Activated T-helper 2 cell treated with anti-CD3 and anti-CD28 coated beads, Interferon-gamma antibody, Interleukin-2, Interleukin-4, amounts not matched to agents 10 μg/mL and 5 μg/mL and 100 μg/mL, durations not matched to agents 14 hours and 24 hours and 36 hours (primary cell): ENCODE measurements at regions of chr15 and their contacts with region 1.

Region 1: DNA sequence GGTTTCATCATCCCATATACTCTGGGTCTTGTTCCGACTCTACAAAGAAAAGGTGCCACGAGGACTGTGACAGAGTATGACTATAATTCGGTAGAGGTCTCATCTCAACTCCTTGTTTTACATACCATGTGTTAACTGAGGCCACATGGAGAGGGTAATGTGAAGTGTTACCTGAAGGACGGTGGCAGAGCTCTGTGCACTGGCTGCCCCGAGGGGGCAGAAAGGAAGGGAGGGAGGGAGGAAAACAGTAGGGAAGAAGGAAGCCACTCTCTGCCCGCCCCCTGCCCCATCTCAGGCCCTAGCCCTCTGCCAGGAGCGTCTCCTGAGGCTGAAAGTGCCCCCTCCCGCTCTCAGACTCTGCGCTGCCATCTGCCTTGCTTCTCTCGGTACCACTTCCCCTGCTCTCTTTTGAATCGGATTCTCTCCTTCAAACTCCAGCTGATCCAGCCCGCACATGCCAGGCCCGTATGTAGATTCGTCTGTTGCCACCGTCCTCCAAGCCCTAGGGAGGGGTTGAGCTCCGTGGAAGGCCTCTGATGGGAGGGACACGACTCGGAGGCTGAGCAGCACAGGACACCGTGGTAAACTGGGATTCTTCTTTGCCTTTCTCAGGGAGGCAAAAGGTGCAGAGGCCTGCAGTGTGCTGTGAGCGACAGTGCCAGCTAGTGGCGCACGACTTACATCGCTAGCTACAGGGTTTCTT is 70.5 kb upstream of the ATP10A start:
- DNase-seq: peak; percentile 61
- H3K4me3 Mint-ChIP-seq: peak overlapping the region; percentile 81
- H3K27ac Mint-ChIP-seq: peak overlapping the region; percentile 51
- H3K4me1 Mint-ChIP-seq: peaks cover 7% of the 10 kb centered on the region
- H3K27me3 Mint-ChIP-seq: peaks cover 12% of the 10 kb centered on the region

Region 2: GRCh38 chr15:25508369-25509002 is 425.1 kb before region 1 on chr15:
- intact Hi-C with region 1: loop called (anchors 10 kb)
- DNase-seq: no peak
- H3K4me3 Mint-ChIP-seq: no peak overlapping the region
- H3K27ac Mint-ChIP-seq: no peak overlapping the region
- H3K4me1 Mint-ChIP-seq: no peaks in the 10 kb centered on the region
- H3K27me3 Mint-ChIP-seq: no peaks in the 10 kb centered on the region

Region 3: GRCh38 chr15:25596644-25597562 is 336.7 kb before region 1 on chr15:
- intact Hi-C with region 1: no loop called
- DNase-seq: no peak
- H3K4me3 Mint-ChIP-seq: no peak overlapping the region
- H3K27ac Mint-ChIP-seq: no peak overlapping the region
- H3K4me1 Mint-ChIP-seq: no peaks in the 10 kb centered on the region
- H3K27me3 Mint-ChIP-seq: no peaks in the 10 kb centered on the region

Region 4: DNA sequence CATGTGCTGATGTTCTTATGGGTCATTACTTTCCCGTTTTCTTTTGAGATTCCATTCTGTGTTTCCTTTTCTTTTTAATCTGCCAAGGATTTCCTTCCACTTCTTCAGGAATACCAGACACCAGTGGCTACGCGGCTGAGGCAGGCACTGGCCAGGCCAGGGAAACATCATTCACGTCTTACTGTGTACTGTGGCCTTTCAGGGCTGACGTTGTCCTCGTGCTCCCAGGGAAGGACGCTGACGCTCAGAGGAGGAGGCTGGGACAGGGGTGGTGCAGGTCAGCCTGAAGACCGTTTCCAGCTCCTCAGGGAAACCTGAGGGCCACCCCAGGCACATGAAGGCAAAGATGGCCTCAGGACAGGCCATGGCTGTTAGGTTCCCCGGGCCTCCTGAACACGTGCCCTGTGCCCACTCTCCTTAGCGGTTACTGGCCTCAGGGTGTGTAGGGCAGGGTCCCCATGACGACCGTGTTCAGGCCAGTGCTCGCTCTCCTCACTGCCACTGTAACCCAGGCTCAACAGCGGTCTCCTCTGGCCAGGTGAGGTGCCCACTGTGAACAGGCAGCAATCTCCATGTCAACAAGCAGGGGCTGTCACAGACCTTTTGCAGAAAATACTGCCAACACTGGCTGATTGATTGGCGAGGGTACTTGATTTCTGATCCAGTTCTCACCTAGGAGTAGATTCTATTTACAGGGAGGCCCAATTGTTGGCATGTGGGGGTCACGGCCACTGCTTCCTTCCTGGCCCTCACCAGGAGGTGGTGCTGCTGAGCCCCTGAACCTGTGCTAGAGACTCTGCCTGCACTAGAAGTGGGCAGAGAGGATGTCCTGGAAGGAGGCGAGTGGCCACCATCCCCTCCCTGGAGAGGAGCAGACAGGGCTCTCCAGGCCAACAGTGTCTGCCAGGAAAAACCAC is 240.0 kb before region 1 on chr15:
- intact Hi-C with region 1: loop called (anchors 1 kb)
- DNase-seq: no peak
- H3K4me3 Mint-ChIP-seq: no peak overlapping the region
- H3K27ac Mint-ChIP-seq: no peak overlapping the region
- H3K4me1 Mint-ChIP-seq: no peaks in the 10 kb centered on the region
- H3K27me3 Mint-ChIP-seq: no peaks in the 10 kb centered on the region

Region 5: DNA sequence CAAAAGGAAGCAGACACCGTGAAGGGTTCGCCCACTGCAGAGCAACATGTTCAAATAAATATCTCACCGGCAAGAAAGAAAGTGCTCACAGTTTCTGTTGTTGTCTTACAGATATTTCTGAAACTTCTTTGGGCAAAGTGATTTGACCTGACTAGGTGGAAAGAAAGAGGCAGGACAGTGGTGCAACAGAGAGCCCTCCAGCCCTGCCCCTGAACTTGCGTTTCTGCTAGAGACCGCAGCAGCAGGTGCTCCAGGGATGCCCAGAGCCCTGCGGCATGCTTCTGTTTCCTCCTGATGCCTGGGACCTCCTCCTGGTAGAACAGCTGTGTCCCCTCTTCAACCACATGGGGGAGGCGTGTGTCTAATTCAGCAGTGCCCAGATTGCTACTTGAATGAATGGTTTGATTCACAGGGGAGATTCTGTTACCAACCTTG is 193.9 kb before region 1 on chr15:
- intact Hi-C with region 1: loop called (anchors 2 kb)
- DNase-seq: no peak
- H3K4me3 Mint-ChIP-seq: no peak overlapping the region
- H3K27ac Mint-ChIP-seq: peak overlapping the region; percentile 47
- H3K4me1 Mint-ChIP-seq: peaks cover 16% of the 10 kb centered on the region
- H3K27me3 Mint-ChIP-seq: no peaks in the 10 kb centered on the region

Region 6: GRCh38 chr15:25783607-25784540 is 149.7 kb before region 1 on chr15:
- intact Hi-C with region 1: loop called (anchors 1 kb)
- DNase-seq: no peak
- H3K4me3 Mint-ChIP-seq: peak overlapping the region; percentile 37
- H3K27ac Mint-ChIP-seq: peak overlapping the region; percentile 85
- H3K4me1 Mint-ChIP-seq: peaks cover 36% of the 10 kb centered on the region
- H3K27me3 Mint-ChIP-seq: no peaks in the 10 kb centered on the region

Region 7: GRCh38 chr15:25863111-25863967 is 70.3 kb before region 1 on chr15 and contains the start of gene ATP10A:
- intact Hi-C with region 1: loop called (anchors 5 kb)
- DNase-seq: peak; percentile 64
- H3K4me3 Mint-ChIP-seq: peak within 1 kb of the TSS; percentile 92
- H3K27ac Mint-ChIP-seq: peak within 1 kb of the TSS; percentile 88
- H3K4me1 Mint-ChIP-seq: peaks cover 37% of the 10 kb centered on the region
- H3K27me3 Mint-ChIP-seq: peaks cover 11% of the 10 kb centered on the region
- total RNA-seq, gene ATP10A: 40.1 and 44.4 TPM in 2 replicates